ENCODE measurements at regions of chr12 and their contacts with region 1.

Region 1: GRCh38 chr12:62466594-62467491 is at the start of gene MON2:
- DNase-seq: peak; percentile 82 to 98 (median 88)

Region 2: GRCh38 chr12:62259993-62260732 is 206.7 kb before region 1 on chr12 and contains the start of gene USP15:
- intact Hi-C with region 1: loop called (anchors 10 kb)
- DNase-seq: peak; percentile 92 to 99 (median 94)

Region 3: DNA sequence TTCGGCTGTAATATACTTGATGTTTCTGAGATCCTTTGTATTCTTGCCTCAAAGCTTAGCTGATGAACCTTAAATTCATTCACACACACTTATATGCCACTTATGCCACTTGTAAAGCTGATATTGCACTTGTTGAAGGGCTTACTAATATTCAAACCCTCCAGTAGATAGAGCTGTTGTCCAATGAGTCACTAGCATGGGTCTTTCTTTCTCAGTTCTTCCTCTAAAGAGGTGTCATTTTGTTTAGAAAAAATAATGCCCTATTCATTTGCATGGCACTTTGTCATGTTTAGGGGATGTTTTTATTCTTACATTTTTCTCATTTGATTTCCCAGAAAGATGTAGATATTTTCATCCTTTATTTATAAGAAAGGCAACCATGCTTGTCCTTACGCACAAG is 56.1 kb after region 1 on chr12:
- intact Hi-C with region 1: loop called (anchors 10 kb)
- DNase-seq: no peak